ENCODE measurements at regions of chr10 and their contacts with region 1.

Region 1: DNA sequence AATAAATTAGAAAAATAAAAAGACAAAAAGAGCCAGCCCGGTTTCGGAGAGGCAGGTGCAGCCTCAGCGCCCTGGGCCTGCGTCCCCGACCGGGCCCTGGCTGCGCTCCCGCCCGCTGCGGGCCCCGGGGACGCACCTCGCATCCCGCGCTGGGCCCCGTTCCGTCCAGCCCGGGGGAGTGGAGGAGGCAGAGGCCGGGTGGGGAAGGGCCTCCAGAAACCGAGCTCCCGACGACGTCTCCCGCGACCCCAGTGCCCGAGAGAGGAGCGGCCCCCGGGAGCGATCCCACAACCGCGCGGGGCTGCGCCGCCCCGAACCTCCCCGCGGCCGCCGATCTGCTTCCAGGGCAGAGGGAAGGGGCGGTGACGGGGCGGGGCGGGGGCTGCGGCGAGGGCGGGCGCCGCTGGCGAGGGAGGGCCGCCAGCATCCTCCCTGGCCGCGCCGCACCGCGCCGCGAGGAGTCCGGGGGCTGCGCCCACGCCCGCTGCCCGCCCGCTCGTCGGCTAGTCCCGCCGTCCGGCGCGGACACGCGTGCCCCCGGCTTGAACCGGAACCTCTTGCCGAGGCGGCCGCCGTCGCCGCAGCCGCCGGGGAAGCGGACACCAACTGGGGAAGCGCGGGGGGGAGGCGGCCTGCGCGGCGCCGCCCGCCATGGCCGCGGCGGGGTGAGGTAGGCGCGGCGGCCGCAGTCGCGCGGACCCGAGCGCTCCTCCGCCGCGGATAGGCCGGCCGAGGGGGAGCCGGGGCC is at the start of gene CCNY:
- DNase-seq: peak; percentile 69
- H3K4me3 Mint-ChIP-seq: peak within 1 kb of the TSS; percentile 93
- H3K27ac Mint-ChIP-seq: peak within 1 kb of the TSS; percentile 95
- H3K4me1 Mint-ChIP-seq: peaks cover 78% of the 10 kb centered on the region
- H3K27me3 Mint-ChIP-seq: no peaks in the 10 kb centered on the region
- total RNA-seq, gene CCNY: 56.5 and 71.0 TPM in 2 replicates

Region 2: GRCh38 chr10:34994565-34995142 is 341.6 kb before region 1 on chr10:
- intact Hi-C with region 1: loop called (anchors 10 kb)
- DNase-seq: peak; percentile 61
- H3K4me3 Mint-ChIP-seq: no peak overlapping the region
- H3K27ac Mint-ChIP-seq: peak overlapping the region; percentile 73
- H3K4me1 Mint-ChIP-seq: peaks cover 21% of the 10 kb centered on the region
- H3K27me3 Mint-ChIP-seq: no peaks in the 10 kb centered on the region

Region 3: GRCh38 chr10:35126530-35127296 is 209.5 kb before region 1 on chr10 and contains the start of gene CREM:
- intact Hi-C with region 1: loop called (anchors 1 kb)
- DNase-seq: peak; percentile 97
- H3K4me3 Mint-ChIP-seq: peak within 1 kb of the TSS; percentile 94
- H3K27ac Mint-ChIP-seq: peak within 1 kb of the TSS; percentile 93
- H3K4me1 Mint-ChIP-seq: peaks cover 66% of the 10 kb centered on the region
- H3K27me3 Mint-ChIP-seq: no peaks in the 10 kb centered on the region
- total RNA-seq, gene CREM: 101 and 106 TPM in 2 replicates

Region 4: GRCh38 chr10:35195361-35196306 is 140.6 kb before region 1 on chr10:
- intact Hi-C with region 1: loop called (anchors 1 kb)
- DNase-seq: peak; percentile 76
- H3K4me3 Mint-ChIP-seq: peak overlapping the region; percentile 92
- H3K27ac Mint-ChIP-seq: peak overlapping the region; percentile 99
- H3K4me1 Mint-ChIP-seq: peaks cover 64% of the 10 kb centered on the region
- H3K27me3 Mint-ChIP-seq: no peaks in the 10 kb centered on the region

Region 5: DNA sequence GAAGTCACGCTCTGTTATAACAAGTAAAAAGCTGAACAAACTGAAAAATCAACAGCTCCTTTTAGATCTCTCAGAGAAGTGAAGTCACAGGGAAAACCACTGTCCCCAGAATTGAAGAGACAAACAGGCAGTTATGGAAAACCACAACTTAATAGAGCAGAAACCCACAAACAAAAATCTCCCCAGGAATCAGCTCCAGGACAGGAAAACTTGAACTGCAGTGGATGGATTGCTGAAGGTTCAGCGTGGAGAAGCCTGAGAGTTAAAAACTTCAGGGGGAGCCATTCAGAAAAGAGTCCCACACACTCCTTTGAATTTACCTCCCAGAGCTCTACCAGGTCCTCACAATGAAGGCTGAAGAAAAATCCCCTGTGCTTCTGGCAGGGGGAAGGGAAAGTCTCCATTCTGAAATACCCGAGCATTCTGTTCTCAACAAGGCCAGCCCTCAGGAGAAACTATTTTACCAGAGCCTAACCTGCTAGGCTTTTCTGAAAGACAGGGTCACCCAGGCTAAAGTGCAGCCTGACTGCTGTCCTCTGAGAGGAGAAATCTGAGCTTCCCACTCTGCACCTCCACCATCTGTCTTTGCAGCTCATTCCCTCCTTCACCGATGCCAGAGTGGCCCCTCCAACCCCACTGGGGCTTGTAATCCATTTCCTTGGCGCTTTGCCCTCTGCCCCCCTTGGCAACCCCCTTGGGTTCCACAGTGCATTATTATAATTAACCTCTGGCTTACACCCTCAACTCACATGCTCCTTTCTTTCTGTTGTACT is 65.0 kb before region 1 on chr10:
- intact Hi-C with region 1: no loop called
- DNase-seq: no peak
- H3K4me3 Mint-ChIP-seq: no peak overlapping the region
- H3K27ac Mint-ChIP-seq: no peak overlapping the region
- H3K4me1 Mint-ChIP-seq: peaks cover 7% of the 10 kb centered on the region
- H3K27me3 Mint-ChIP-seq: no peaks in the 10 kb centered on the region

Region 6: GRCh38 chr10:35409094-35409582 is 72.9 kb after region 1 on chr10:
- intact Hi-C with region 1: loop called (anchors 1 kb)
- DNase-seq: no peak
- H3K4me3 Mint-ChIP-seq: no peak overlapping the region
- H3K27ac Mint-ChIP-seq: no peak overlapping the region
- H3K4me1 Mint-ChIP-seq: peaks cover 8% of the 10 kb centered on the region
- H3K27me3 Mint-ChIP-seq: peaks cover 1% of the 10 kb centered on the region

Region 7: DNA sequence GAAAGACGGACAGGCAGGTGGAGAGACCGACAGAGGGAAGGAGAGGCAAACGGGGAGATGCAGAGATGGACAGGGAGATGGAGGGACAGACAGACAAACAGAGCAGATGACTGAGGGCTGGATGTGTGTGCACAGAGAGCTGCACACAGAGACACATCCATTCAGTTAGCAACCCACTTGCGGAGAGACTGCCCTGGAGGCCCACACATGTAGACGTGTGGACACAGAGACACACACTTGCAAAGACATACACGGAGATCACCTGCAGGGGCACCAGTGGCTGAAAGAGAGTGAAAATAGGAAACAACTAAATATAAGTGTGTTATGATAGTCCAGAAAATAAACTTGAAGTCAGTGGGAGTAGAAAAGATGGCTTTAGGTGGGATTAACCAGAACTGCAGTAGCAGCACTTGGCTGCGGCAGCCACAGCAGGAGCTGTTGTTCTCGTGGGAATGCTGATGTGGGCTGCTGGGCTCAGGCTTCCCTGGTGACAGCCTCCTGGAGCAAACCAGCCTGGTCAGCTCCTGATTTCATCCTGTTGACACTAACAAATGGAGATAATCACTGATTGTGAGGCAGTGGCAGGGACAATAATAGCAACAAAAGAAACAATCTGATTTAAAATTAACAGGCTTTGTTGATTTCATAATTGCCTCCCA is 134.1 kb after region 1 on chr10:
- intact Hi-C with region 1: no loop called
- DNase-seq: no peak
- H3K4me3 Mint-ChIP-seq: no peak overlapping the region
- H3K27ac Mint-ChIP-seq: no peak overlapping the region
- H3K4me1 Mint-ChIP-seq: peaks cover 7% of the 10 kb centered on the region
- H3K27me3 Mint-ChIP-seq: no peaks in the 10 kb centered on the region

Region 8: GRCh38 chr10:35540296-35541164 is 204.3 kb after region 1 on chr10:
- intact Hi-C with region 1: loop called (anchors 5 kb)
- DNase-seq: no peak
- H3K4me3 Mint-ChIP-seq: no peak overlapping the region
- H3K27ac Mint-ChIP-seq: peak overlapping the region; percentile 83
- H3K4me1 Mint-ChIP-seq: peaks cover 22% of the 10 kb centered on the region
- H3K27me3 Mint-ChIP-seq: no peaks in the 10 kb centered on the region

Region 9: GRCh38 chr10:35642027-35642792 is 306.0 kb after region 1 on chr10 and contains the start of gene FZD8:
- intact Hi-C with region 1: loop called (anchors 10 kb)
- DNase-seq: peak; percentile 54
- H3K4me3 Mint-ChIP-seq: peak within 1 kb of the TSS; percentile 83
- H3K27ac Mint-ChIP-seq: no peak within 1 kb of the TSS
- H3K4me1 Mint-ChIP-seq: peaks cover 14% of the 10 kb centered on the region
- H3K27me3 Mint-ChIP-seq: peaks cover 67% of the 10 kb centered on the region
- total RNA-seq, gene FZD8: 0.41 and 0.56 TPM in 2 replicates